ENCODE measurements at regions of chr14 and their contacts with region 1.

Region 1: GRCh38 chr14:75982266-75983018 is 647 bp upstream of the TGFB3 start:
- DNase-seq: peak; percentile 86
- ATAC-seq: peak; percentile 70
- H3K4me3 ChIP-seq: peak overlapping the region; percentile 45 to 87 (median 74)
- H3K4me3 Mint-ChIP-seq: peak overlapping the region; percentile 89
- H3K27ac ChIP-seq: peak overlapping the region in 1 of 2 donors; percentile 82
- H3K27ac Mint-ChIP-seq: peak overlapping the region; percentile 87
- H3K4me1 ChIP-seq: peaks cover 41 to 56% of the 10 kb centered on the region in 2 donors
- H3K4me1 Mint-ChIP-seq: peaks cover 54% of the 10 kb centered on the region
- H3K27me3 ChIP-seq: no peaks in the 10 kb centered on the region
- H3K27me3 Mint-ChIP-seq: no peaks in the 10 kb centered on the region
- CTCF ChIP-seq: peak; percentile 78

Region 2: GRCh38 chr14:74018586-74019407 is 1963.6 kb before region 1 on chr14 and contains the starts of genes BBOF1 and ENTPD5:
- CTCF ChIA-PET with region 1: no interaction called
- POLR2A ChIA-PET with region 1: no interaction called
- intact Hi-C with region 1: loop called (anchors 10 kb)
- DNase-seq: peak; percentile 93
- ATAC-seq: peak; percentile 96
- H3K4me3 ChIP-seq: peak within 1 kb of the TSS; percentile 39 to 95 (median 81)
- H3K4me3 Mint-ChIP-seq: peak within 1 kb of the TSS; percentile 97
- H3K27ac ChIP-seq: peak within 1 kb of the TSS; percentile 57 to 84
- H3K27ac Mint-ChIP-seq: peak within 1 kb of the TSS; percentile 93
- H3K4me1 ChIP-seq: peaks cover 5 to 12% of the 10 kb centered on the region in 2 donors
- H3K4me1 Mint-ChIP-seq: peaks cover 15% of the 10 kb centered on the region
- H3K27me3 ChIP-seq: no peaks in the 10 kb centered on the region
- H3K27me3 Mint-ChIP-seq: no peaks in the 10 kb centered on the region
- CTCF ChIP-seq: no peak
- total RNA-seq, gene BBOF1: 2.6 and 3.4 TPM in 2 replicates
- total RNA-seq, gene ENTPD5: 14.7 and 15.6 TPM in 2 replicates

Region 3: GRCh38 chr14:75542588-75543091 is 439.8 kb before region 1 on chr14:
- CTCF ChIA-PET with region 1: no interaction called
- POLR2A ChIA-PET with region 1: no interaction called
- intact Hi-C with region 1: no loop called
- DNase-seq: peak; percentile 83
- ATAC-seq: peak; percentile 79
- H3K4me3 ChIP-seq: peak overlapping the region; percentile 7 to 54 (median 34)
- H3K4me3 Mint-ChIP-seq: peak overlapping the region; percentile 78
- H3K27ac ChIP-seq: peak overlapping the region; percentile 61 to 88
- H3K27ac Mint-ChIP-seq: peak overlapping the region; percentile 94
- H3K4me1 ChIP-seq: peaks cover 34 to 52% of the 10 kb centered on the region in 2 donors
- H3K4me1 Mint-ChIP-seq: peaks cover 50% of the 10 kb centered on the region
- H3K27me3 ChIP-seq: no peaks in the 10 kb centered on the region
- H3K27me3 Mint-ChIP-seq: no peaks in the 10 kb centered on the region
- CTCF ChIP-seq: no peak

Region 4: DNA sequence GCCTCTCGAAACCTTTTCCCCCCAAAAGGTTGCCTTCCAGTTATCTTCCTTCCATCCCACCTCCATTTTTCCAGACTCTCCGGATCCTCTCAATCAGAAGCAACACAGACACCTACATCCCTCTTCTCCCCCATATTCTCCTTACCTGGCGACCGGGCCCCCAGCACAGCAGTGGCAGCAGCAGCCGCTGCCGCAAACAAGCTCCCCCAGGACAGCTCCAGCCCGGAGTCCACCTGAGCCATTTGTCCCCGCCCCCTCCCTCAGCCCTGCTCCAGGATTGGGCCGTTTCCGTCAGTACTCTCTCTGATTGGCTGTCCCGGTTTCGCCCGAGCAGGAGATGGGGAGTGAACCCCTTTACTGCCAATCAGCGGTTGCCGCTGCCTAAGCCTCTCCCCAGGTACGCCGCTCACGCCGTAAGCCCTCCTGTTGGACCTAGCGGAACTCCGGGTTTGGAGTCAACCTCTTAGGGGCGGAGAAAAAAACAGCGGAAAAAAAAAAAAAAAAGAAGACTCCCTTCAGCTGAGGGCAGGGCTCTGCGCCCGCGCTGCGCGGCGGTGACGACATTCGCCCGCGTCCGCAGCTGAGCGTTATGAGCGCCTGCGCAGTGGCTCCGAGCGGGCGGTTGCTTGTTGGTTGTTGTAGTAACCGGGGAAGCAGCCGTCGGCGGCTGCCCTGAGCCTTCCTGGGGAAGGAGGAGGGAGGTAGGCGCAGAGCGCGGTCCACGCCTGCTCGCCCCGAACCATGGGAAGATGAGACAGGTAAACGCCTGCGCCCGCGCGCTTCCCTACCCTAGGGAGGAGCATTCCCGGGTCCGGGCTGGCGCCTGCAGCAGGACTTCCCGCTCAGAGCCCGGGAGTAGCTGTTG is 321.6 kb before region 1 on chr14 and contains the starts of genes ERG28 and TTLL5:
- CTCF ChIA-PET with region 1: interaction called, 3 read pairs
- POLR2A ChIA-PET with region 1: no interaction called
- intact Hi-C with region 1: loop called (anchors 2 kb)
- DNase-seq: peak; percentile 98
- ATAC-seq: peak; percentile 94
- H3K4me3 ChIP-seq: peak within 1 kb of the TSS; percentile 73 to 95 (median 85)
- H3K4me3 Mint-ChIP-seq: peak within 1 kb of the TSS; percentile 95
- H3K27ac ChIP-seq: peak within 1 kb of the TSS; percentile 80 to 96
- H3K27ac Mint-ChIP-seq: peak within 1 kb of the TSS; percentile 96
- H3K4me1 ChIP-seq: peaks cover 14 to 15% of the 10 kb centered on the region in 2 donors
- H3K4me1 Mint-ChIP-seq: peaks cover 27% of the 10 kb centered on the region
- H3K27me3 ChIP-seq: no peaks in the 10 kb centered on the region
- H3K27me3 Mint-ChIP-seq: no peaks in the 10 kb centered on the region
- CTCF ChIP-seq: no peak
- total RNA-seq, gene ERG28: 11.7 and 13.7 TPM in 2 replicates
- total RNA-seq, gene TTLL5: 47.0 and 50.9 TPM in 2 replicates

Region 5: GRCh38 chr14:75906676-75907280 is 75.7 kb before region 1 on chr14:
- CTCF ChIA-PET with region 1: interaction called, 376 read pairs
- POLR2A ChIA-PET with region 1: interaction called, 3 read pairs
- intact Hi-C with region 1: loop called (anchors 1 kb)
- DNase-seq: peak; percentile 76
- ATAC-seq: no peak
- H3K4me3 ChIP-seq: no peak overlapping the region
- H3K4me3 Mint-ChIP-seq: no peak overlapping the region
- H3K27ac ChIP-seq: no peak overlapping the region
- H3K27ac Mint-ChIP-seq: no peak overlapping the region
- H3K4me1 ChIP-seq: no peaks in the 10 kb centered on the region
- H3K4me1 Mint-ChIP-seq: no peaks in the 10 kb centered on the region
- H3K27me3 ChIP-seq: no peaks in the 10 kb centered on the region
- H3K27me3 Mint-ChIP-seq: no peaks in the 10 kb centered on the region
- CTCF ChIP-seq: peak; percentile 97

Region 6: DNA sequence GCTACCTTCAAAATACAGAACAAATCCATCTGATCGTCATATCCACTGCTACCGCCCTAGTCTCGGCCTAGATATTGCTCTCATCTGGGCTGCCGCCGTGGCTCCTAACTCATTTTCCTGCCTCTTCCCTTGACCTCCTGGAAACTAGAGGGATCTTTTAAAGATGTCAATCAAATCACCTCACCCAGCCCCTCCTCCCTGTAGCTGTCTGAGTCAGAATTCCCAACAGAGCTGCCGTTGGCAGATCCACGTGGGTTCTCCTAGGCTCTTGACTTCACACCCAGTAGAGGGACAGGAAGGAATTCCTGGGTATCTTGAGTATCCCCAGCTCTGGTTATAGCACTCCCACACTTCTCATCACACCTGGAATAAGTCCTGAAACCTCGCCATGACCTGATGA is 12.6 kb before region 1 on chr14:
- CTCF ChIA-PET with region 1: interaction called, 11 read pairs
- POLR2A ChIA-PET with region 1: no interaction called
- intact Hi-C with region 1: no loop called
- DNase-seq: no peak
- ATAC-seq: no peak
- H3K4me3 ChIP-seq: no peak overlapping the region
- H3K4me3 Mint-ChIP-seq: no peak overlapping the region
- H3K27ac ChIP-seq: no peak overlapping the region
- H3K27ac Mint-ChIP-seq: no peak overlapping the region
- H3K4me1 ChIP-seq: peaks cover 4 to 7% of the 10 kb centered on the region in 2 donors
- H3K4me1 Mint-ChIP-seq: peaks cover 9% of the 10 kb centered on the region
- H3K27me3 ChIP-seq: no peaks in the 10 kb centered on the region
- H3K27me3 Mint-ChIP-seq: no peaks in the 10 kb centered on the region
- CTCF ChIP-seq: no peak

Region 7: GRCh38 chr14:77320238-77320935 is 1337.9 kb after region 1 on chr14 and contains the start of gene POMT2:
- CTCF ChIA-PET with region 1: no interaction called
- POLR2A ChIA-PET with region 1: no interaction called
- intact Hi-C with region 1: loop called (anchors 10 kb)
- DNase-seq: peak; percentile 96
- ATAC-seq: peak; percentile 56
- H3K4me3 ChIP-seq: peak within 1 kb of the TSS; percentile 59 to 99 (median 93)
- H3K4me3 Mint-ChIP-seq: peak within 1 kb of the TSS; percentile 100
- H3K27ac ChIP-seq: peak within 1 kb of the TSS; percentile 89 to 92
- H3K27ac Mint-ChIP-seq: peak within 1 kb of the TSS; percentile 100
- H3K4me1 ChIP-seq: peaks cover 10 to 16% of the 10 kb centered on the region in 2 donors
- H3K4me1 Mint-ChIP-seq: peaks cover 18% of the 10 kb centered on the region
- H3K27me3 ChIP-seq: no peaks in the 10 kb centered on the region
- H3K27me3 Mint-ChIP-seq: no peaks in the 10 kb centered on the region
- CTCF ChIP-seq: peak; percentile 43
- total RNA-seq, gene POMT2: 36.6 and 44.1 TPM in 2 replicates

Measured in B cell (primary cell).